Naive thymus-derived CD8-positive, alpha-beta T cell (primary cell): ENCODE measurements at regions of chr22 and their contacts with region 1.

Region 1: DNA sequence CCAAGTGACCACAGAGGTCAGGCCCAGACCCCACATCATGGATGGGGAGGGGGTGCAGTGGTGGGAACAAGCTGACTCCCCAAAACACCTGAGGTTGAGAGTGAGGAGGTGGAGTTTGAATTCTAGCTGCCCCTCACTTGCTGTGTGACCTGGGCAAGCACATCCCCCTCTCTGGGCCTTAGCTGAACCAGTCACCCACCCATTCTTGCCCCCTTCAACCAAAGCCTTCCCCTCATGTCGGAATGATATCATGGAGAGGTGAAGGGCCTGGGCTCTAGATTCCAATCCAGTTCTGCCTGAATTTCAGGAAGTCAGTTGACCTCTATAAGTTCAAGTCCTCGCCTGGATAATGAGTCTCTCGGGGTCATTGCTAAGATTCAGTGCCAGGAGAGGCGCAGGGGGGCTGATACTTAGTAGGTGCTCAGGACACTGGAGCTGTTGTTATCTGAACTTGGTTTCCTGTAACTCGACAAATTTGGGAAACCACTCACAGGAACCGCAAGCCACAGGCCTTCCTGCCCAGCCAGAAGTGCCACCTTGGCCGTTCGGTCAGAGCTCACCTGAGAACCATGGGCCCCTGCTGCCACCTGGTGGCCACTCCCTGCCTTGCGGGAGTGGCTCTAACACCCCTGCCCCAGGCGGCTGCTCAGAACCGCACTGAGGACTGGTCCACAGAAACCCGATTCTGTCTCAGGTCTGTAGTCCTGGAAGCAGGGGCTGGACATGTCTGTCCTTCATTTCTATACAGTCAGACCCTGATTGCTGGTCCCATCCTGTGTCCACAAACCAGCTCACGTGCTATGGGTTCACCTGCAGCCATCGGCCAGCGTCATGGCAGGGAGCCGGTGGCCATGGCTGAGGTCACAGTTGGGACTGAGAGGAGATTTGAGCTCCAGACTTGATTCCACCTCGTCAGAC is 6.9 kb downstream of the CDC42EP1 start:
- DNase-seq: peak; percentile 73 to 93 (median 86)
- ATAC-seq: peak; percentile 87 to 91
- H3K4me3 Mint-ChIP-seq: peak overlapping the region; percentile 52 to 84 (median 76)
- H3K27ac Mint-ChIP-seq: peak overlapping the region in 8 of 10 donors; percentile 19 to 80 (median 56)
- H3K4me1 Mint-ChIP-seq: peaks cover 9 to 36% (median 26%) of the 10 kb centered on the region in 4 donors
- H3K27me3 Mint-ChIP-seq: peaks cover 6 to 19% (median 15%) of the 10 kb centered on the region in 5 donors

Region 2: DNA sequence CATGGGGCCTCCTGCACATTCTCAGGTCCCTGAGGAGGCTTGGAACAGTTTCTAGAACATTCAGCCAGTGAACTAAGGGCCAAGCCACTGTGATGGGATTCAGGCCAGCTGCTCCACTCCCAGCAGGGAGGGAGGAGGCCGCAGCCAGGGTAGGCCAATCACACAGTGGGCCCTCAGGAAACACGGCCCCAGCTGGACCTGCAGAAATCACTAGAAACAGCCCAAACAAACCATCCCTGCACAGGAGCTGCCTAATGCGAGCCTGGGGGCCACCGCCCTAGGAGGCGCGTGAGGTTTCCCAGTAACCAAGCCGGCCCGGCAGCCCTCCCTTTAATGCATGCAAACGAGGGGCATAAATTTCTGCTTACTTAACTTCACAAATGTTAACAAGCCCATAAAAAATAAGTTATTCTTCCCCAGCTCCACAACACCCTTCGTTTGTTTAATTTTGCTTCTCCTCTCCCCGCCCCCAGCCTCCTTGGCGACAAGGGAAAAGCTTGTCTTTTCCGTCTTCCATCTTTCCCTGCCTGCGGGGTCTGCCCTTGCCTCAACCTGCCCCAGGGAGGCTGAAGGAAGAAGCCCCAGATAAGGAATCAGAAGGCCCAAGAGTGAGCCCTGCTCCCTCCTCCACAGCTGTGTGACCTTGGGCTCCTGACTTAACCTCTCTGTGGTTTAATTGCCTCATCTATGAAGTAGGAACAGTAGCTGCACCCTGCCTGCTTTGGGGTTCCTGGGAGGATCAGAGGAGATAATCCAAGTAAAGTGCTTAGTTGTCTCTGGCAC is 165.6 kb before region 1 on chr22:
- POLR2A ChIA-PET with region 1: no interaction called
- DNase-seq: no peak
- ATAC-seq: no peak
- H3K4me3 Mint-ChIP-seq: no peak overlapping the region
- H3K27ac Mint-ChIP-seq: no peak overlapping the region
- H3K4me1 Mint-ChIP-seq: peaks cover 0 to 5% (median 2%) of the 10 kb centered on the region in 4 donors
- H3K27me3 Mint-ChIP-seq: peaks cover 2 to 9% (median 4%) of the 10 kb centered on the region in 5 donors

Region 3: GRCh38 chr22:37538590-37539357 is 28.4 kb before region 1 on chr22:
- POLR2A ChIA-PET with region 1: interaction called, 48 read pairs
- DNase-seq: peak; percentile 80 to 93 (median 86)
- ATAC-seq: peak; percentile 99 to 100
- H3K4me3 Mint-ChIP-seq: peak overlapping the region in 6 of 10 donors; percentile 37 to 81 (median 62)
- H3K27ac Mint-ChIP-seq: peak overlapping the region in 2 of 10 donors; percentile 21 to 29
- H3K4me1 Mint-ChIP-seq: peaks cover 13 to 31% (median 24%) of the 10 kb centered on the region in 4 donors
- H3K27me3 Mint-ChIP-seq: peaks cover 8 to 43% (median 15%) of the 10 kb centered on the region in 5 donors

Region 4: DNA sequence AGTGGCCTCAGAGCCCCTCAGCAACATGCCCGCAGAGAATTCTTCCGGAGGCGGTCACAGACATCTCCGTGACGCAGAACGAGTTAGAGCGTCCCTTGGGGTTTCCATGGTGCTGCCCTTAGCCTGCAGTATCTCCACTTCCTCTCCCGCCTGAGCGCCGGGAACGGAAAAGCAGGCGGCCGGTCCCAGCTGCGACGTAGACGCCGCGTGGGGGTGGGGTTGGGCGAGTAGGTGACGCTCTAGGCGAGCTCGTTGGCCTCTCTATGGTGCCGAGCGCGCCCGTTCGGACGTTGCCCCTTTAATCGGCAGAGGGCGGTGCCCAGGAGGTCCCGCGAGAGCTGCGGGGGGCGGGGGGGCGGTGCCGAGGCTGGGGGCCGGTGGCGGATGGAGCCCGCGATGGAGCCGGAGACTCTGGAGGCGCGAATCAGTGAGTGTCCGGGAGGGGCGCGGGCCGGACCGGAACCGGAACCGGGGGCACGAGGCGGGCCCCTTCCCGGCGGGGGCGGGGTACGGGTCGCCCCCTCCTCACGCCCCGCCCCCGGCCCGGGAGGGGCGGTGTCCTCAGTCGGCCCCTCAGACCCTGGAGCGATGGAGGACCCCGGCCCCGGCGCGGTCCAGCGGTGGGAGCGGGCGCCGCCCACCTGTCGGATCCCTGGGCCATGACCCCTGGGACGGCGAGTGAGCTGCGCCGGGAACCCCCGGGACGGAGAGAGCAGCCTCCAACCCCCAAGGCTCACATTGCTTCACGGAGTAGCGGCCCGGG is 41.5 kb after region 1 on chr22 and contains the start of gene GGA1:
- POLR2A ChIA-PET with region 1: interaction called, 10 read pairs
- DNase-seq: peak; percentile 92 to 99 (median 97)
- ATAC-seq: peak; percentile 74 to 78
- H3K4me3 Mint-ChIP-seq: peak within 1 kb of the TSS; percentile 88 to 96 (median 93)
- H3K27ac Mint-ChIP-seq: peak within 1 kb of the TSS; percentile 95 to 99 (median 98)
- H3K4me1 Mint-ChIP-seq: peaks cover 30 to 68% (median 62%) of the 10 kb centered on the region in 4 donors
- H3K27me3 Mint-ChIP-seq: no peaks in the 10 kb centered on the region
- polyA plus RNA-seq, gene GGA1: 20.3 to 24.5 (median 22.6) TPM